Activated CD4-positive, alpha-beta T cell treated with anti-CD3 and anti-CD28 coated beads for 36 hours (primary cell): ENCODE measurements at regions of chr20 and their contacts with region 1.

Region 1: DNA sequence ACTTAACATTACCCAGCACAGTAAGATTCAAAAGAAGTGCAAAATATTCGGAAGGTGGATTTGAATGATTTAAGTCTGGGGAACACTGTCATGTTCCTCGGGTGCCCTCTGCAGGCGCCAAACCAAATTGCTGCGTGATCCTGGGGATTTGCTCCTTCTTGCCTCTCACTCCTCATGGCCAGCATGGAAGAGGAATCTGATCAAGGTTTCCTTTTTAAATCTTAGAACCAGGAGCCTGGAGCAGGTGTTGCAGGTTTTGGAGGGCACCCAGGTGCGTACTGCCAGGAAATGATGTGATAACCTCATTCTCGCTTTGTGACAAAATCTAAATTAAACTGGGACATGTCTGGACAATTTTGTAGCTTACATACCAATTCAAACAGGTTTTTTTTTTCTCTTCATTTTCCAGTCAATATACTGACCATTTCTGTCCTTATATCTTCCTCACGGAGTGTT is 8.1 kb upstream of the PFDN4 start:
- DNase-seq: peak; percentile 81
- ATAC-seq: peak; percentile 57
- H3K4me3 Mint-ChIP-seq: no peak overlapping the region
- H3K27ac Mint-ChIP-seq: no peak overlapping the region
- H3K4me1 Mint-ChIP-seq: no peaks in the 10 kb centered on the region
- H3K27me3 Mint-ChIP-seq: peaks cover 2% of the 10 kb centered on the region

Region 2: DNA sequence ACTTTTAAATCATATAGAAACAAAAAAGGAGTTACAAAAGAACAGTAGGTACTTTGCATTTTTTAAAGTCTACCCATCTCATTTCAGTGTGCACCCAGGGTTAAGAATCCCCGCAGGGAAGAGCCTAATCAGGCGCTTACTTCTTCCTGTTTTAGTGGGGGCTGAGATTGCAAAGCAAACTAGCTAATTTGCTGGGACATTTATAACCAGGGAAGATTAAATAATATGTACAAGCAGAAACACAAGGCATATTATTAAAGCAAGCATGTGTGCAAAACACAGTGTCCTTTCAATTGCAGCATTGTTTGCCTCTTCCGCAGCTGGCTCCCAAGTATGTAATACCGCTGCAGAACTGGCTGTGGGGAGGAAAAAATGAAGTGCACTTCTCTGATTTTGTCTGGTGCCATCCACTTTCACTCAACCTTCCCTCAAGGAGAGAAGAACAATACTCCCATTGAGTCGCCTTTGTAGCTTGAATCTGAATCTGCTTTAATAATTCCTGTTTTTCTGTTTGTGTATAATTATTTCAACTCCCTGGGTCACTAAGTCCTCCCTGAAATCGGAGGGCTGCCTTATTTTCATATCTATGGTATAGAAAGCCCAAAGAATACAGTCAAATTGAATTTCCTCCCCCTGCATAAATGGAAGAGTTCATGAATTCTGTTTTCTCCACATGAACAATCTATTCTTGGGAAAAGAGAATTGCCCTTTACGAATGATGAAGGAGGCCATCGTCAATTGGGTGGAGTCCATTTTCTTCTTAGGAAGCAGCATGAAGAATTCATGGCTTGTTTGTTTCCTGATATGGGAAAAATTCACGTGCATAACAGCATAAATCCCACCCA is 106.1 kb before region 1 on chr20:
- CTCF ChIA-PET with region 1: interaction called, 88 read pairs
- POLR2A ChIA-PET with region 1: no interaction called
- intact Hi-C with region 1: loop called (anchors 1 kb)
- DNase-seq: no peak
- ATAC-seq: no peak
- H3K4me3 Mint-ChIP-seq: no peak overlapping the region
- H3K27ac Mint-ChIP-seq: no peak overlapping the region
- H3K4me1 Mint-ChIP-seq: no peaks in the 10 kb centered on the region
- H3K27me3 Mint-ChIP-seq: no peaks in the 10 kb centered on the region

Region 3: DNA sequence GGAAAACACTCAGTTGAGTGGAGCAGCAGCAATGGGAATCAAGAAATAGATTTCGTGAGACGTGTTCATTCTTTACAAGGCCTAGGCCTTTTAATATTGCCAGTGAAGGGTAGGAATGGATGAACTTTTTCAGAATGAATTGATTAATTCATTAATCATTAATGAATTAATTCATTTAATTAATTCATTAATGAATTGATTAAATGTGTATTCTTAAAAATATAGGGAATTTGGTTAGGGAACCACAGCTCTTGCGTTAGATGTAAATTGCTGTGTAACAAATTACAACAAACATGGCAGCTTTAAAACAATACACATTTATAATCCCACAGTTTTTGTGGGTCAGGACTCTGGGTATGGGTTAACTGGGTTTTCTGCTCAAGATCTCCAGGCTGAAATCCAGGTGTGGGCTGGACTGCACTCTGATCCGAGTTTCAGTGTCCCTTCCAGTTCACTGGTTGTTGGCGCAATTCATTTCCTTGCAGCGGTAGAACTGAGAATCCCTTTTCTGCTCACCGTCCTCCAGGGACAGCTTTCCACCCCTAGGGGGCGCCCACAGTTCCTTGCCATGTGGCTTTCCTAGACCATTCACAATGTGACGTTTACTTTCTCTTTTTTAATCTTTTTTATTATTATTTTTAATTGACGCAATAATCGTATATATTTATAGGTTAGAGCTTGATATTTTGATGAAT is 96.5 kb before region 1 on chr20:
- CTCF ChIA-PET with region 1: interaction called, 88 read pairs
- POLR2A ChIA-PET with region 1: no interaction called
- intact Hi-C with region 1: no loop called
- DNase-seq: peak; percentile 89
- ATAC-seq: peak; percentile 77
- H3K4me3 Mint-ChIP-seq: no peak overlapping the region
- H3K27ac Mint-ChIP-seq: no peak overlapping the region
- H3K4me1 Mint-ChIP-seq: peaks cover 5% of the 10 kb centered on the region
- H3K27me3 Mint-ChIP-seq: peaks cover 10% of the 10 kb centered on the region